ENCODE measurements at regions of chr14 and their contacts with region 1.

Region 1: DNA sequence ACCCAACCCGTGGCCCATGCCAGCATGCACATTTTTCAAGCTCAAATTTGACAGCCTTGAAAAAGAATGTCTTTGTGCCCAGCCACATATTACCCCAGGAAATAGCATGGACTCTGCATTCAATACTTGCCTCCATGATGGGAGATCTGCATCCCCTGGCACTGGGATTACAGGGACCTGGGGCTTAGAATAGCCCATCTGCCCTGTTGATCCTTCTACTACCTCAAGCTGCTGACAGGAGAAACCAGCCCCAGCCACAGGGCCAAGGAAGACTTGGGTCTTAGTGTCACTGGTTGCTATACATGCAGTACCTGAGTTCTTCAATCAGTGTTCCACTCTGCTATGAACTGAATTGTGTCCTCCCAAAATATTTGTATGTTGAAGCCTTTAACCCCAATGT is 85.3 kb downstream of the LRRC74A start:
- DNase-seq: no peak
- H3K4me3 Mint-ChIP-seq: no peak overlapping the region
- H3K27ac Mint-ChIP-seq: no peak overlapping the region
- H3K4me1 Mint-ChIP-seq: peaks cover 72% of the 10 kb centered on the region
- H3K27me3 Mint-ChIP-seq: no peaks in the 10 kb centered on the region

Region 2: GRCh38 chr14:76926521-76927251 is 15.2 kb after region 1 on chr14:
- CTCF ChIA-PET with region 1: interaction called, 17 read pairs
- DNase-seq: peak; percentile 88
- H3K4me3 Mint-ChIP-seq: peak overlapping the region; percentile 69
- H3K27ac Mint-ChIP-seq: peak overlapping the region; percentile 93
- H3K4me1 Mint-ChIP-seq: peaks cover 97% of the 10 kb centered on the region
- H3K27me3 Mint-ChIP-seq: peaks cover 20% of the 10 kb centered on the region

Region 3: DNA sequence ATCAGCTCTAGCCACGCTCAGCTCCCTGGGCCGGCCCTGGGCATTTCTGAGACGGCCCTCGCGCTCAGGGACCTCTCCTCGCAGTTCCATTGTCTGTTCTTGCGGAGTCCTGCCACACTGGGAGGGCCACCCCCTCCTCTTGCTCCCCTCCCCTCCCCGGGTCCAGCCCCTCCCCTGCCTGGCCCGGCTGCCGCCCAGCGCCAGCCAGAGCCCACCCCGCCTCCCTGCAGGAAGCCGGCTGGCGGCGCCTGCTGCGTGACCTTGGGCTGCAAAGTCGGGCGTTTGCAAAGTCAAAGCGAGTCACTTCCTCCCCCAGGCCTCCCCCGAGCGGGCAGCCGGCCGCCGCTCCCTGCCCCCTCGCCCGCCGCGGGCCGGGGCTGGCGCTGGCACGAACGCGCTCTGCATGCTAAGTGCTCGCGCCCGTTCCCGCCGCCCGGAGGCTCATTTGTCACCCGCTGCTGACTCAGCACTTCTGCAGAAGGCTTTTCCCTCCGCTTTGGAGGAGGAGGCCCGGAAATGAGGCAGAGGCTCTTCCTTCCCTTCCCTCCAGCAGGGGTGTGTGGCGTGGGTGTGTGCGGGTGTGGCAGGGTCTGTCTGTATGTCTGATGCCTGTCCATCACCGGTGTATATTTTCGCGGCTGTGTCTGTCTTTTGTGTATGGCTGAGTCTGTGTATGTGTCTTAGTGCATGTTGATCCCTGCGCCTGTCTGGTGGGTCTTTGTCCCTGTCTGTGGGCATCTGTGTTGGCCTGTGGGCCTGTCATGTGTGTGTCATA is 45.0 kb after region 1 on chr14:
- CTCF ChIA-PET with region 1: interaction called, 55 read pairs
- DNase-seq: peak; percentile 92
- H3K4me3 Mint-ChIP-seq: peak overlapping the region; percentile 81
- H3K27ac Mint-ChIP-seq: peak overlapping the region; percentile 98
- H3K4me1 Mint-ChIP-seq: peaks cover 88% of the 10 kb centered on the region
- H3K27me3 Mint-ChIP-seq: no peaks in the 10 kb centered on the region

Region 4: DNA sequence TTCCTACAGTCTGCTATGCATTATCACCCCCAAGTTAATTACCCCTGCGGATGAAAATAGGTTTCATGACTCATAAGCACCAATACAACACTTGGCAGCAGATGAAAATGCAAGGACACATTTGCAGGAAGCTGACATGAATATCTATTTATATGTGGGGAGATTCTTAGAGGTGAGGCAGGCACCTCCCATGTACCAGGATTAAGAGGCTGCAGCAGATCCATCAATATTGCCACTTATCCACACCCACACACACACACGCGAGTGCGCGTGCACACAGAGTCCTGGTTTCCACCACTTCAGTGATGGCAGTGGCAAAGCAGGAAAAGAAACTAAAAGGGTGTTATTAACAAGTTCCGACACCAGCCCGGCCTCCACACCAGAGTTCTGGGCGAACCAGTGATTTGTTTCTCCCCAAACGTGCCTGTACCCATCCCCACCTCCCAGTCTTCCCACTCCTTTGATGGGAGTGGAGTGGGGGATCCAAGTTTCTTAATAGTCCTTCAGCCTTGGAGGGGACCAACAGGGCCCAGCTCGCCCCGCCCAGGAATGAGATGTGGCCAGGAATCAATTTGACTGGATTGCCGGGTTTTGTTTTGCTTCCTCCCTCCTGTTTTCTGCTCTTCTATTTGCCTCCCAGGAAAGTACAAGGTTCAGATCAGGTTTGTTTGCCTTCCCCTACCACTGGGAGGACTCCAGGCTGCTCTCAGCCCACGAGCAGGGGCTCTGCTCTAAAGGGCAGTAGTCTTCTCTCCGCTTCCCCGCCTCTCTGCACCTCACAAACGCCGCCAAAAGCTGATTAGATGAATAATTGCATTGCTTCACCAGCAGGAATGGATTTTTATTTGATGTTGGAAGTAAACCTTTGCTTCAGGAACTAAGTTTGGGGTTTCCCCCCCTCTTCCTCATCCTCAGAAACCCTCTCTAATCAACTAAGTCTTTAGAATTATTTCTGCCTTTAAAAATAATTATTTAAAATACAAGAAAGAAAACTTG is 111.8 kb after region 1 on chr14:
- CTCF ChIA-PET with region 1: interaction called, 32 read pairs
- DNase-seq: no peak
- H3K4me3 Mint-ChIP-seq: peak overlapping the region; percentile 2
- H3K27ac Mint-ChIP-seq: peak overlapping the region; percentile 77
- H3K4me1 Mint-ChIP-seq: peaks cover 52% of the 10 kb centered on the region
- H3K27me3 Mint-ChIP-seq: peaks cover 4% of the 10 kb centered on the region

Region 5: GRCh38 chr14:77033622-77034521 is 122.4 kb after region 1 on chr14:
- CTCF ChIA-PET with region 1: interaction called, 46 read pairs
- DNase-seq: peak; percentile 84
- H3K4me3 Mint-ChIP-seq: peak overlapping the region; percentile 86
- H3K27ac Mint-ChIP-seq: peak overlapping the region; percentile 92
- H3K4me1 Mint-ChIP-seq: peaks cover 91% of the 10 kb centered on the region
- H3K27me3 Mint-ChIP-seq: no peaks in the 10 kb centered on the region

Measured in activated naive CD4-positive, alpha-beta T cell treated with anti-CD3 and anti-CD28 coated beads, Interleukin-2, amount 10 ng/mL, durations not matched to agents 7 days and 5 days (primary cell).